ENCODE measurements at regions of chr11 and their contacts with region 1.

Region 1: DNA sequence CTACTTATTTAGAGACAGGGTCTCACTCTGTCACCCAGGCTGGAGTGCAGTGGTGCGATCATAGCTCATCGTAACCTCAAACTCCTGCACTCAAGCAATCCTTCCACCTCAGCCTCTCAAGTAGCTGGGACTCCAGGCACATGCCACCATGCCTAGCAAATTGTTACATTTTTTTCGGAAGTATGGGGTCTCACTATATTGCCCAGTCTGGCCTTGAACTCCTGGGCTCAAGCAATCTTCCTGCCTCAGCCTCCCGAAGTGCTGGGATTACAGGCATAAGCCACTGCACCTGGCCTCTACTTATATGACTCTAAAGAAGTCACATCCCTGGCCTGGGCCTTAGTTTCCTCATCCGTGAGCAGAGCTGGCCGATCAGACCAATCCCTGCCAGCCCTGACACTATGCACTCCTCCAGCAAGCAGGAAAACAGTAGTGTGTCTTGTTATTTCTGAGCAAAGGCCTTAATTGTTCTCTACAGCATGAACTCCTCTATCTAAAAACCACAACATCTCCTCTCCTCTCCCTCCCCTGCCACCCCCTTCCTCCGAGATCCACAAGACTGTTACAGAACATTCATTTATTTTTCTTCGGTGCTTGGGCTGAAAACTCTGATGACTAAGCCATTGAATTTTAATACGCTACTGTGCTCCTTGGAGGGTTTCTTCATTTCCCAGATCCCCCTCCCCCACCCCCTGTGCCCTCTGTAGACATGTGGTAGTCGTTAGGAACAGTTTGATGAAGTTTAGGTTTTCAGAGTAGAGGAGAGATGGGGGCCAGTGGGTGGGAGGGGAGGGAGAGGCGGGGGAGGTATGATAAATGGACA is 91.5 kb downstream of the ABTB2 start:
- DNase-seq: peak; percentile 78
- ATAC-seq: peak; percentile 64
- H3K4me3 ChIP-seq: no peak overlapping the region
- H3K27ac ChIP-seq: peak overlapping the region; percentile 70
- H3K4me1 ChIP-seq: peaks cover 46% of the 10 kb centered on the region
- H3K27me3 ChIP-seq: no peaks in the 10 kb centered on the region
- CTCF ChIP-seq: no peak

Region 2: GRCh38 chr11:34331329-34331728 is 65.0 kb after region 1 on chr11:
- CTCF ChIA-PET with region 1: no interaction called
- POLR2A ChIA-PET with region 1: no interaction called
- intact Hi-C with region 1: loop called (anchors 5 kb)
- DNase-seq: peak; percentile 86
- ATAC-seq: peak; percentile 82
- H3K4me3 ChIP-seq: peak overlapping the region; percentile 26; the same call in 1 of the 2 replicates
- H3K27ac ChIP-seq: peak overlapping the region; percentile 80
- H3K4me1 ChIP-seq: peaks cover 50% of the 10 kb centered on the region
- H3K27me3 ChIP-seq: no peaks in the 10 kb centered on the region
- CTCF ChIP-seq: no peak

Measured in PC-3 (cell line).